ENCODE measurements at regions of chr3 and their contacts with region 1.

Region 1: DNA sequence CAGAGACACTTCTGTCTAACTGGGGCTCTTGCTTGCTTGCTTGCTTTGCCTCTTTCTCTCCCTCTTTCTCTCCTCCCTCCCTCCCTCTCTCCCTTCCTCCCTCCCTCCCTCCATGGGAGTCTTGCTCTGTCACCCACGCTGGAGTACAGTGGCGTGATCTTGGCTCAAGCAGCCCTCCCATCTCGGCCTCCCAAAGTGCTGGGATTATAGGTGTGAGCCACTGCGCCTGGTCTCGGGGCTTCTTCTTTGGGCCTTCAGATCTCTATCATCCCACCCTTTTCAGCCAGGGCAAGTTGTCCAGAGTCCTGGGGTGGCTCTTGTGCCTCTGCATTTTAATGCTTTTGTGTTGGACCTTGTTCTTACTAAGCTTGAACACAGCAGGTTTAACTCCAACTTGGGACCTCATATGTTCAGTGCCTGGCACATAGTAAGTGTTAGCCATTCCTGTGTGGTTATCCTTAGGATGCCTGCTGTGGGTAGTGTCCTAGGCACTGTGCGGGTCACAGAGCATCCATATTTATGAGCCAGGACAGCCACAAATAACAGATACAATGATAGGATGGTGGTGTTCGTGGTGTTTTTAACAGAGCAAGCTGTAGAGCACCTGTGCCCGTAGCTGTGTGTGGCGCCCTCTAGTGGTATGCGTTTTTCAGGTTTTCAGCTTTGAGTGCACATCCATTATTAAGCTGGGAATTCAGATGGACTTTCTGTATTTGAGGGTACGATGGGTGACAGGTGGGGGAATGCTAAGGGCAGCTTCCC is 75.1 kb downstream of the CCK start:
- DNase-seq: no peak
- ATAC-seq: peak; percentile 63

Region 2: DNA sequence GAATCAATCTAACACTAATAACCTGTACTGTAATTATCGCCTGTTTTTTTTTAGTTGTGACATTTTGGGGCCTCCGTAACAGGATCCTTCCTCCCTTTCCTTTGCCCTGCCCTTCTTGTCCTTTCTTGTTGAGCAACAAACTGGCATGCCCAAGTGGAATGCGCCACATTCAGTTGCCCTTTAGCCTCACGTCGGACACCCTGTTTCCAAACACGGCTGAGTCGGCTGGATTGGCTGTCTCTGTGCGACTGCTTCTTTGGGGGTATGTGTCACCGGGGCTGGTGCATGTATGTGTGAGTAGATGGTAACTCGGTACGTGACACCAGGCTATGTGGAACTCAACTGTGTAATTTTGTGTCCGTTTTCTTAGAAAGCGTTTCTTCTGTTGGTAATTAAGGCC is 75.7 kb before region 1 on chr3:
- intact Hi-C with region 1: loop called (anchors 2 kb)
- DNase-seq: peak; percentile 54
- ATAC-seq: peak; percentile 44

Region 3: DNA sequence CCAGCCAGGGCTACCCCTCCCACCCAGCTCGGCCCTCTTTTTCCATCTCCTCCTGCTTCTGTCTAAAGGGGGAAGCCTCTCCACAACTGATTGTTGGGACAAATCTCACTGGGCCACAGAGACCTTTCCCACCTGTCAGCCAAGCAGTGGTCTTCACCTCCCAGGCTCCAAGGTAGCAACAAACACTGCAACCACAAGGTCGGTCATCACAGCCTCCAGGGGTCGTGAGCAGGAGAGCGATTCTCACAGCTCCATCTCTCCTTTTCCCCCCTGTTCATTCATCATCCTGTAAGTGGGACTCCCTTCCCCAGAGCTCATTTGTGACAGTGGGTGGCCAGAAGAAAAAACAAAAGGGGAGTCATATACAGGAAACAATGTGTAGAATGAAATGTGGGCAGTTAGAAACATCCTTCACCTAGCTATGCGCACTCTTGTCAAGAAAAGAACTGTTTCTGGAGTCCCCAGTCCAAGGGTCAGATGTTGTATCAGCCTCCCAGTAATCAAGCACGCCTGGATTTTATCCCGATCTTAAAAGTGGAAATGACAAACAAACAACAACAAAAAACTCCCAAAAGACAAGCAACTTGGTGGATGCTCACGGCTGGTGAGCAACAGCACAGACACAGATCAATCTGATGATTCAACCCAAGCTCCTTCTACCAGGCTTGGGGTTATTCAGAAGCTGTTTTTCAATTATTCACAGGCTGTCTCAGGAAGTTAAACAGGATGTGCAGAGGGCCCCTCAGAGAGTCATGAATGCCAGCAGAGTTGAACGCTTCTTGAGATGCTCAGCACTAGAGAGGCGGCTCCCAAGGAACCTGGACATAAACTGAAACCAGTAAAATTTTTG is 197.1 kb after region 1 on chr3:
- intact Hi-C with region 1: no loop called
- DNase-seq: no peak
- ATAC-seq: no peak

Measured in Right ventricle myocardium superior (tissue), 1 donor.